Activated CD4-positive, alpha-beta T cell treated with anti-CD3 and anti-CD28 coated beads, Interleukin-2, amount 10 ng/mL, durations not matched to agents 24 days and 14 days (primary cell): ENCODE measurements at regions of chr2 and their contacts with region 1.

Region 1: GRCh38 chr2:37389989-37390765 is 45.7 kb downstream of the QPCT start:
- DNase-seq: peak; percentile 91
- H3K4me3 Mint-ChIP-seq: peak overlapping the region; percentile 53
- H3K27ac Mint-ChIP-seq: peak overlapping the region; percentile 92
- H3K4me1 Mint-ChIP-seq: peaks cover 19% of the 10 kb centered on the region
- H3K27me3 Mint-ChIP-seq: peaks cover 8% of the 10 kb centered on the region

Region 2: DNA sequence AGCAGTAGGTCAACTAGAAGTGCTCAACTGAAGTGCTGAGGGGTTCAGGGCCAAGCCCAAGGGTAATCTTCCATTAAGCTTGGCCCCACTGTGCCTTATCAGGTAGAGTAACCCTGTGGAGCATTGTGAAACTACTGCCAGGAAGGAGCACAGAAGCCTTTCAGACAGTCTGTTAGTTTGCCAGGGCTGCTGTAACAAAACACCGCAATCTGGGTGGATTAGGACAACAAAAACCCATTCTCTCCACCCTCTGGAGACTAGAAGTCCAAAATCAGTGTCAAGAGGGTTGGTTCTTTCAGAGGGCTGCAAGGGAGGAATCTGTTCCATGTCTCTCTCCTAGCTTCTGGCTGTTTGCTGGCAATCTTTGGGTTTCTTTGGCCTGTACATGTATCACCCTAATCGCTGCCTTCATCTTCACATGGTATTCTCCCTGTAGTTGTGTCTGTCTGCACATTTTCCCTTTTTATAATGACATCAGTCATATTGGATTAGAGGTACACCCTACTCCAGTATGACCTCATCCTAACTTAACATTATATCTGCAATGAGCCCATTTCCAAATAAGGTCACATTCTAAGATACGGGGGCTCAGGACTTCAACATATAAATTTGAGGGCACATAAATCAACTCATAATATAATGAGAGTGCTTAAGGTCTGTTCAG is 672.4 kb before region 1 on chr2:
- intact Hi-C with region 1: no loop called
- DNase-seq: no peak
- H3K4me3 Mint-ChIP-seq: no peak overlapping the region
- H3K27ac Mint-ChIP-seq: no peak overlapping the region
- H3K4me1 Mint-ChIP-seq: no peaks in the 10 kb centered on the region
- H3K27me3 Mint-ChIP-seq: no peaks in the 10 kb centered on the region

Region 3: GRCh38 chr2:37324786-37325624 is 65.2 kb before region 1 on chr2 and contains the start of gene PRKD3:
- intact Hi-C with region 1: loop called (anchors 1 kb)
- DNase-seq: peak; percentile 89
- H3K4me3 Mint-ChIP-seq: peak within 1 kb of the TSS; percentile 95
- H3K27ac Mint-ChIP-seq: peak within 1 kb of the TSS; percentile 92
- H3K4me1 Mint-ChIP-seq: peaks cover 27% of the 10 kb centered on the region
- H3K27me3 Mint-ChIP-seq: peaks cover 48% of the 10 kb centered on the region
- total RNA-seq, gene PRKD3: 20.2 and 21.9 TPM in 2 replicates

Region 4: GRCh38 chr2:37335604-37336003 is 54.6 kb before region 1 on chr2:
- intact Hi-C with region 1: no loop called
- DNase-seq: no peak
- H3K4me3 Mint-ChIP-seq: no peak overlapping the region
- H3K27ac Mint-ChIP-seq: no peak overlapping the region
- H3K4me1 Mint-ChIP-seq: peaks cover 2% of the 10 kb centered on the region
- H3K27me3 Mint-ChIP-seq: peaks cover 72% of the 10 kb centered on the region

Region 5: GRCh38 chr2:37376421-37377186 is 13.6 kb before region 1 on chr2:
- intact Hi-C with region 1: loop called (anchors 1 kb)
- DNase-seq: peak; percentile 85
- H3K4me3 Mint-ChIP-seq: peak overlapping the region; percentile 77
- H3K27ac Mint-ChIP-seq: peak overlapping the region; percentile 89
- H3K4me1 Mint-ChIP-seq: peaks cover 32% of the 10 kb centered on the region
- H3K27me3 Mint-ChIP-seq: peaks cover 49% of the 10 kb centered on the region

Region 6: GRCh38 chr2:37456479-37456878 is 66.3 kb after region 1 on chr2:
- intact Hi-C with region 1: no loop called
- DNase-seq: peak; percentile 66
- H3K4me3 Mint-ChIP-seq: no peak overlapping the region
- H3K27ac Mint-ChIP-seq: peak overlapping the region; percentile 22
- H3K4me1 Mint-ChIP-seq: peaks cover 17% of the 10 kb centered on the region
- H3K27me3 Mint-ChIP-seq: no peaks in the 10 kb centered on the region

Region 7: GRCh38 chr2:37871456-37872191 is 481.4 kb after region 1 on chr2:
- intact Hi-C with region 1: loop called (anchors 1 kb)
- DNase-seq: no peak
- H3K4me3 Mint-ChIP-seq: peak overlapping the region; percentile 69
- H3K27ac Mint-ChIP-seq: peak overlapping the region; percentile 94
- H3K4me1 Mint-ChIP-seq: peaks cover 45% of the 10 kb centered on the region
- H3K27me3 Mint-ChIP-seq: peaks cover 2% of the 10 kb centered on the region

Region 8: GRCh38 chr2:38377050-38377828 is 987.1 kb after region 1 on chr2 and contains the start of gene ATL2:
- intact Hi-C with region 1: loop called (anchors 10 kb)
- DNase-seq: peak; percentile 98
- H3K4me3 Mint-ChIP-seq: peak within 1 kb of the TSS; percentile 92
- H3K27ac Mint-ChIP-seq: peak within 1 kb of the TSS; percentile 95
- H3K4me1 Mint-ChIP-seq: peaks cover 58% of the 10 kb centered on the region
- H3K27me3 Mint-ChIP-seq: no peaks in the 10 kb centered on the region
- total RNA-seq, gene ATL2: 58.1 and 67.3 TPM in 2 replicates